PC-3 (cell line): ENCODE measurements at regions of chr2 and their contacts with region 1.

Region 1: DNA sequence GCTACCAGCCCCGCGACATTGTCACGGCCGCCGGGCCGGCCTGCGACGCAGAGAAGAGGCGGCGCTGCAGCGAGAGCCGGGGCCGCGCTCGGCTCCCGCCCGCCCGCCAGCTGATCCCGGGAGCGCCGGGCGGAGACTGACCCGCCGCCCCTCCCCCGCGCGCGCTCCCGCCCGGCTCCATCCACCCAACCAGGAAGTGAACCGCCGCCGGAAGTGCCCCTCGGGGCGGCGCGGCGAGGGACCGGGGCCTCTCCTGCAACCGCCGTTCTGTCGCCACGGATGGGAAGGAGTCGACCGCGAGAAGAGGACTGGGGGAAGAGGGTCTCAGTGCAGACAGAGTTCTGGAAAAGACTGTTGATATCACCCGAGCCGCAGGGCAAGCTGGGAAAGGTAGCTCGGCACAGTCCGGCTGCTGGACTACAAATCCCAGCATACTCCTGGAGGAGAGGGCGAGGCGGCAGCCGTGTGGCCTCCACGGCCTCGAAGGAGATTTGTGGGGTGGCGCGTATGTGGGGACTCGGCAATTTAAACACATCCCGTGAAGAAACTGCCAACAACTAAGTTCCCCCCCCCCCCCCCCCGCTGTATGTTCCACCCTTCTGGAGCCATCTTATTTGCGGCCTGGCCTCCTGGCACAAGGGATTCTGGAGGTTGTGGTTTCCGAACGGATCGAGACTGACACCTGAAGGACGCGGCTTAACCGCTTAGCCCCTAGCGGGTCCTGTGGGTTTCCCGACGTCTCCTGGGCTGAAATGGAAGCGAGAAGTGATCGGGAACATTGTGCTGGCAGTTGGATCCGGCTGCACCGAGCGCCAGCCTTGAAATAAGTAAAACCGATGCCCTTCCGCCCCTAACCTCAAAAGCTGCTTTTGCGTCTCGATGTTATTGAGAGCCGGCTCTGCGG is at the start of gene AAK1:
- DNase-seq: peak; percentile 86
- ATAC-seq: peak; percentile 75
- H3K4me3 ChIP-seq: peak within 1 kb of the TSS; percentile 89
- H3K27ac ChIP-seq: peak within 1 kb of the TSS; percentile 94
- H3K4me1 ChIP-seq: peaks cover 37% of the 10 kb centered on the region
- H3K27me3 ChIP-seq: no peaks in the 10 kb centered on the region
- CTCF ChIP-seq: no peak
- total RNA-seq, gene AAK1: 46.8 and 47.9 TPM in 2 replicates

Region 2: DNA sequence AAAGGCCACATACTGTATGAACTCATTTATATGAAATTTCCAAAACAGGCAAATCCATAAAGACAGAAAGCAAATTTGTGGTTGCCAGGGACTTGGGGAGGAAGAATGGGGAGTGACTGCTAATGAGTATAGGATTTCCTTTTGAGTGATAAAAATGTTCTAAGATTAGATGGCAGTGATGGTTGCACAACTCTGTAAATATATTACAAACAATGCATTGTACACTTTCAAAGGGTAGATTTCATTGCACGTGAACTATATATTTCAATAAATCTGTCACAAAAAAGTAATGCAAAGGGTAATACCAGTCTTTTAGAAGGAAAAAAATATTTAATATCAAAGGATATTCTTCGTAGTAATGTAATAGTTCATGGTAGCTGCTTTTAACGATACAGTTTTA is 1064.2 kb before region 1 on chr2:
- CTCF ChIA-PET with region 1: no interaction called
- POLR2A ChIA-PET with region 1: no interaction called
- intact Hi-C with region 1: no loop called
- DNase-seq: no peak
- ATAC-seq: no peak
- H3K4me3 ChIP-seq: no peak overlapping the region
- H3K27ac ChIP-seq: no peak overlapping the region
- H3K4me1 ChIP-seq: 0 out of 2 replicates have a peak, but pooled peaks cover under 1% of the 10 kb centered on the region
- H3K27me3 ChIP-seq: no peaks in the 10 kb centered on the region
- CTCF ChIP-seq: no peak

Region 3: DNA sequence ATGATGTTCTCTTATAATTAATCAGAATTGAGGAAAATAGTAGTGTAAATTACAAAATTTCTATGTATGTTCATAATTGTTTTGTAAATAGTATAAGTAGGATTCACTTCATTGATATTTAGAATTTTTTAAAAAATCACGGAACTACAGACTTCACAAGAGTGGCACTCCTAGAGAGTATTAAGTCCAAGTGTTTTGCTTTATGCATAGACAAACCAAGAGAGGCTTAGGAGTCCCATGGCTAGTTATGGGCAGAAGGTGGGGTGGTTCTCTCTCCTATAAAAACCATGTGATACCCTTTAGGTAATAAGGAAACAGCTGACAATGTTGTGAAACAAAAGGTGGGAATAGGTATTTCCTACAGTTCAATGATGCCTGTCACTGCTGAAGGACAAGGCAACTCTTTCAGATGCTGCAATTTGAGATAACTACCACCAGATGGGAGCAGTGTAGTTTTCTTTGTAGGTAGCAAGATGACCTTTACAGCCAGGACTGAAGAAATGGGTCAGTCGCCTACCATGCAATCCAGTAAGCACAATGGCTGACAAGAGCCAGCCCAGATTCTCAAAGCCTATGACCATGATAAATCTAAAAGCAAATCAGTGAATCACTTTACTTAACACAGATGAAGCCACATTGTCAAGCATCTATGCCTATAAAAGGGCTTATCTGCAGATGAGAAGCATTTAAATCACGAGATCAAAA is 84.3 kb before region 1 on chr2:
- CTCF ChIA-PET with region 1: no interaction called
- POLR2A ChIA-PET with region 1: no interaction called
- intact Hi-C with region 1: loop called (anchors 2 kb)
- DNase-seq: peak; percentile 80
- ATAC-seq: peak; percentile 72
- H3K4me3 ChIP-seq: no peak overlapping the region
- H3K27ac ChIP-seq: no peak overlapping the region
- H3K4me1 ChIP-seq: peaks cover 16% of the 10 kb centered on the region; the same call in 1 of the 2 replicates
- H3K27me3 ChIP-seq: no peaks in the 10 kb centered on the region
- CTCF ChIP-seq: peak; percentile 93

Region 4: DNA sequence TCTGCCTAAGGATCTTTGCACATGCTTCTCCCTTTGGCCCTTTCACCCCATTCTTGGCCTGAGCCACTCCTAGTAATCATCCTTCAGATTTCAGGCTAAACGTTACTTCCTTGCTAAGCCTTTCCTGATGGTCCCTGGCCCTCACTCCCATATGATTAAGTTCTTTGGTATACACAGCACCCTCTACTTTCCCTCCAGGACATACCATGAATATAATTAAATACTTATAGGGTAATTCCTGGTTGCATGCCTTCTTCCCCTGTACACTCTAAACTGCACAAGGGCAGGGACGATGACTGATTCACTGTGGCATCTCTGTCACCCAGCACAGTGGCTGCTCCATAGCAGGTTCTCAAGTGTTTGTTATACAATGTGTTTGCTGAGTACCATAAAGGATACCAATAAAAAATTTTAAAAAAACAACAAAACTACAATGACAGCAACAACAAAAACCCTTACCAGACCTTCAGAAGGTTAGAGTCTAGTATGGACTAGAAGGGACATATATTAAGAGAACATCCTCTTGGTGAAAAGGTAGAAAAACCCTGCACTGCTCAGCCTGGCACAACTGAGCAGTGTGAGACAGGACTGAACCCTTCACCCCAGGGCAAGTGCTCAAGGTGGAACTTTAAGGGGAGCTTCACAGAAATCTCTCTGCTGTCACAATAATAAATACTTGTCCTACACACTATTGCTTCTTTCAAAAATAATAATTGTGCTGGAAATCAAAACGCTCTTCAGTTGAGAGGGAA is 76.5 kb before region 1 on chr2:
- CTCF ChIA-PET with region 1: no interaction called
- POLR2A ChIA-PET with region 1: no interaction called
- intact Hi-C with region 1: loop called (anchors 2 kb)
- DNase-seq: peak; percentile 89
- ATAC-seq: peak; percentile 84
- H3K4me3 ChIP-seq: no peak overlapping the region
- H3K27ac ChIP-seq: peak overlapping the region; percentile 83
- H3K4me1 ChIP-seq: peaks cover 73% of the 10 kb centered on the region
- H3K27me3 ChIP-seq: no peaks in the 10 kb centered on the region
- CTCF ChIP-seq: 0 out of 2 replicates have a peak, but pooled peaks have one; percentile 17

Region 5: DNA sequence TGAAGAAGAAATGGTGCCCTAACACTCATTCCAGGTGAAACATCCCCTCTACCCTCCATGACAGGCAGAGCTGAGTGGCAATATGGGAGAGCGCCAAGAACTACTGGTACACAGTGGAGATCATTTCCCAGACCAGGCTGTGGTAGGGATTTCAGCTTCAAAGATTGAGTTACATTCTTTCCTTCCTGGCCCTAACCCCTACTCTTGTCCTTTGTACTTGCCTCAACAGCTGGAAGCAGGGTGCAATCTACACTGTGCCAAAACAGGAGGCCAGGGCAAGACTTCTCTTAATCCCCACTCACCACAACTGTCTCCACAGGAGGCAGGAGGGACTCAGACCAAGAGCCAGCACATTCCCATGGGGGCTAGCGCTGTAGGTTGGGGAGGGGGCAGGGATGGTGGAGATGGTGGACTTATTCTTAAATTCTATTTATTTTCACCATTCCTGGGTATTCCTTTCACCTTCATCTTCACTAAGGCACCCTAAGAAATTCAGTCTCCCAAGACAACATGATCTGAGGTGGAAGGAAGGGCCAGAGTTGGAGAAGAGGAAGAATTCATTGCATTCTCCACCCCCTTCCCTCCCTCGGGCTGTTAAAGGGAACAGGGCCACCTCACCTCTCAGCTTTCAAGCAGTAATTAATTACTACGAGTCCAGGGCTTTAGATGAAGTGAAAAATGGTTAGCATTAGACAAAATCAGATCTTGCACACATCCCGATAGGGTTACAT is 66.2 kb before region 1 on chr2:
- CTCF ChIA-PET with region 1: no interaction called
- POLR2A ChIA-PET with region 1: no interaction called
- intact Hi-C with region 1: no loop called
- DNase-seq: no peak
- ATAC-seq: no peak
- H3K4me3 ChIP-seq: no peak overlapping the region
- H3K27ac ChIP-seq: no peak overlapping the region
- H3K4me1 ChIP-seq: peaks cover 29% of the 10 kb centered on the region
- H3K27me3 ChIP-seq: no peaks in the 10 kb centered on the region
- CTCF ChIP-seq: no peak

Region 6: GRCh38 chr2:69677914-69678313 is 34.1 kb after region 1 on chr2:
- CTCF ChIA-PET with region 1: no interaction called
- POLR2A ChIA-PET with region 1: no interaction called
- intact Hi-C with region 1: loop called (anchors 5 kb)
- DNase-seq: peak; percentile 76
- ATAC-seq: peak; percentile 63
- H3K4me3 ChIP-seq: peak overlapping the region; percentile 36; the same call in 1 of the 2 replicates
- H3K27ac ChIP-seq: peak overlapping the region; percentile 86
- H3K4me1 ChIP-seq: peaks cover 32% of the 10 kb centered on the region
- H3K27me3 ChIP-seq: no peaks in the 10 kb centered on the region
- CTCF ChIP-seq: no peak

Region 7: DNA sequence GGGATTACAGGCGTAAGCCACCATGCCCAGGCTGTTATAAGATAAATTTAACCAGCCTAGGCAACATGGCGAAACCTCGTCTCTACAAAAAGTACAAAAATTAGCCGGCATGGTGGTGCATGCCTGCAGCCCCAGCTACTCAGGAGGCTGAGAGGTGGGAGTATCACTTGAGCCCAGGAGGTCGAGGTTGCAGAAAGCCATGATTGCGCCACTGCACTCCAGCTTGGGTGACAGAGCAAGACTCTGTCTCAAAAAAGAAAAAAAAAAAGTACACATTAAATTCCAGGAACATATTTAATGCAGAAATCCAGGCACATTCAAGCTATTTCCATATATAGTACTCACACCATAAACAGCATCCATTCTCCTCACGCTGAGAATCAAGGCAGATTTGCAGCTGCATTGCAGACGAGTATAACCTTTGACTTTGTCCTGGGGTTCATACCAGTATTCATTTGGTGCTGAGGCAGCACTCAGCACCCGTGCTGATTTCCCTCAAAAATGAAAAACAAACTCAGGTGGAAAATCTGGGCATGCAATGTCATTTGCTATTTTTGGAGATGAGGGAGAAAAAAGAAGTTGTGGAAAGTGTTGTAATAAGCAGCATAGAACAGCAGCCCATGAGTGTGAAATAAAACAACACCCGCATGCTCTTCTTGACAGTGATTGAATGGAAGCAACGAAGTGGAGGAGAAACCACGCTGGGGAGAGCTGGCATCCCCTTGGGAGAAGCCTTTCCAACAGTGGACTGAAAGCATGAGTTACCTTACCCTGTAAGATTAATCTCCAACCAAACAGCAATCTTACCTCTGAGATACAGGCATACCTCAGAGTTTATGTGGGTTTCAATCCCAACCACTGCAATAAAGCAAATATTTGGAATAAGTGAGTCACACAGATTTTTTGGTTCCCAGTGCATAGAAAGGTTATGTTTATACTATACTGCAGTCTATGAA is 51.3 kb after region 1 on chr2:
- CTCF ChIA-PET with region 1: no interaction called
- POLR2A ChIA-PET with region 1: interaction called, 4 read pairs
- intact Hi-C with region 1: loop called (anchors 1 kb)
- DNase-seq: peak; percentile 97
- ATAC-seq: peak; percentile 85
- H3K4me3 ChIP-seq: peak overlapping the region; percentile 49
- H3K27ac ChIP-seq: peak overlapping the region; percentile 88
- H3K4me1 ChIP-seq: peaks cover 43% of the 10 kb centered on the region
- H3K27me3 ChIP-seq: no peaks in the 10 kb centered on the region
- CTCF ChIP-seq: no peak

Region 8: GRCh38 chr2:69709290-69709689 is 65.4 kb after region 1 on chr2:
- CTCF ChIA-PET with region 1: interaction called, 3 read pairs
- POLR2A ChIA-PET with region 1: no interaction called
- intact Hi-C with region 1: loop called (anchors 1 kb)
- DNase-seq: no peak
- ATAC-seq: no peak
- H3K4me3 ChIP-seq: no peak overlapping the region
- H3K27ac ChIP-seq: no peak overlapping the region
- H3K4me1 ChIP-seq: peaks cover under 1% of the 10 kb centered on the region; the same call in 1 of the 2 replicates
- H3K27me3 ChIP-seq: no peaks in the 10 kb centered on the region
- CTCF ChIP-seq: no peak